ENCODE measurements at regions of chr1 and their contacts with region 1.

Region 1: GRCh38 chr1:84792421-84792820 is 100.6 kb downstream of the LPAR3 start:
- H3K4me3 ChIP-seq: no peak overlapping the region
- H3K27ac ChIP-seq: no peak overlapping the region
- H3K4me1 ChIP-seq: no peaks in the 10 kb centered on the region
- CTCF ChIP-seq: no peak

Region 2: DNA sequence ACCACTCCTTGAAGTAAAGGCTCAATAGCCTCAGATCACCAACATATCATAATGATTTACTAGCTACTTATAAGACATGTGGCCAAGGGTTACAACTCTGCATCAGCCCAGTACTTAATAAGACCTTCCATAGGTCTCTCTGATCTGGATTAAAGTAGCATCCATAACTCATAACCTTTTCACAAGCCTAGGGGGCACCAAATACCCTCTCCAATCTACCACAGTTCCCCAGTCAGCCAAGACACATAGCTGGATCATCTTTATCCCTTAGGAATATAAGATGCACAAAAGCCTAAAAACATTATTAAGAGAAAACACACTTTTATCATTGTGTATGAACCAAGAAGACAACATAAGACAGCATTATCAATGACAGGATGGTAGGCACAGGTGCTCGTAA is 124.2 kb before region 1 on chr1:
- CTCF ChIA-PET with region 1: no interaction called
- POLR2A ChIA-PET with region 1: no interaction called
- H3K4me3 ChIP-seq: no peak overlapping the region
- H3K27ac ChIP-seq: no peak overlapping the region
- H3K4me1 ChIP-seq: peaks cover 8% of the 10 kb centered on the region; the same call in 1 of the 2 replicates
- CTCF ChIP-seq: no peak

Region 3: DNA sequence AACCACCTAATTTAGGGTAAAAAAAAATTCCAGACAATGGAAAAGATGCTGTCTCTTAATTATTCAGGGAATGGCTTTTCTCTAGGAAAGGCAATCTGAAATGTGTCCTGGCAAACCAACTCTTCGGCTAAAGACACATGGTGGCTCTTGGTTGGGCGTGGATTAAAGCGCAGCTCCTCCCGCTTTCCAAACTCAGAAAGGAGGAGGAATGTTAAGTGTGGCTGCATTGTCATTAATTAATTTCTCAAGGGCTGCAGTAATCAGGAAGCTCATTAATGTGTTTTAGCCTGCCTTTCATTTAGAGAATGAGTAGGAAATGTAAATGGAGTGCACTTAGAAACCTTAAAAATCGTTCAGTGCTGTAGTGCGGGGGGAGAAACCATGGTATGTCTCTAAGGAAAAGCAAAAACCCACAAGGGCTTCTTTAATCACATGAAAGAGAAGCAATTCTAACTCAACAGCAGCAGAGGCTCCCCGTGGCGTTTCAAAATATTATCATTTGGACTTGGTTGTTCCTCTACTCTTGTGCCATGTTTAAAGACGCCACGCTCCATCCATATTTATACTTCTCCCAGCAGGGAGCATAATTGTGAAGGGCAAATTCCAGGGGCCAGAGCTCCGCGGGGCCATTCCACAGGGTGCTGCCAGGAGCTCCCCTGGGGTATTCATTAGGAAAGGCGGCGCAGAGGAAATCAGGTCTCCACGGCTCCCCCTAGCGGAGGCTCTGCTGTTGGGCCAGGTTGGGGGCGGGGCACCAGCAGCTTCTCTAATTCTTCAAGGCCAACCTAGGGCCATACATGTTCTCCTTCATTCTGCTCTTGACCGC is 10.3 kb before region 1 on chr1:
- CTCF ChIA-PET with region 1: interaction called, 15 read pairs
- POLR2A ChIA-PET with region 1: no interaction called
- H3K4me3 ChIP-seq: no peak overlapping the region
- H3K27ac ChIP-seq: no peak overlapping the region
- H3K4me1 ChIP-seq: no peaks in the 10 kb centered on the region
- CTCF ChIP-seq: peak; percentile 73